ENCODE measurements at regions of chr6 and their contacts with region 1.

Region 1: DNA sequence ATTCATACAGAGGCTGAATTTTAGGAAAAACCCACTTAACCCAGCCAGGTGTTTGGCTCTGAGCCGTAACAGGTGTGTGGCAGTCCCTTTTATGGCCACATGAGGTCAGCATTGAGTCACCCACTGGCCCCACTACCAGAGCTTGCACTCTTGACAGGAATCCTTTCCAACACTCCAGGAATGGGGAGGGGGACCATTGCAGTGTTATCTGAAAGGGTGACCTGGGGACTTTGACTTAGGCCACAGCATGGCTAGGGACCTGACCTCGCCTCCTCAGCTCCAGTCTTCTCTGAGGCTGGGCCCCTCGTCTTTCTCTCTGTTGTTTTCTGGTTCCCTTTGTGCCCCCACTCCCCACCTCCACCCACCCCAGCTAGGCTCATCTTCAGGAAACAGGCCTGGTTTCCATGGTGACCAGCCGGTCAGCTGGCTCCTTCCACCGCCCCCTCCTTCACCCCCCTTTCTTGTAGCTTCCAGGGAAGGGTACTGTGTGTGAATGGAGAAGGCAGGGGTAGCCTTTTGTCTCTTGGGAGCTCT is 2.1 kb upstream of the TMEM151B start:
- DNase-seq: peak; percentile 62
- H3K4me3 Mint-ChIP-seq: no peak overlapping the region
- H3K27ac Mint-ChIP-seq: no peak overlapping the region
- H3K4me1 Mint-ChIP-seq: peaks cover 46% of the 10 kb centered on the region
- H3K27me3 Mint-ChIP-seq: peaks cover 42% of the 10 kb centered on the region

Region 2: GRCh38 chr6:44278774-44279697 is 10.9 kb after region 1 on chr6:
- CTCF ChIA-PET with region 1: interaction called, 16 read pairs
- POLR2A ChIA-PET with region 1: no interaction called
- DNase-seq: no peak
- H3K4me3 Mint-ChIP-seq: no peak overlapping the region
- H3K27ac Mint-ChIP-seq: no peak overlapping the region
- H3K4me1 Mint-ChIP-seq: peaks cover 2% of the 10 kb centered on the region
- H3K27me3 Mint-ChIP-seq: peaks cover 39% of the 10 kb centered on the region

Region 3: DNA sequence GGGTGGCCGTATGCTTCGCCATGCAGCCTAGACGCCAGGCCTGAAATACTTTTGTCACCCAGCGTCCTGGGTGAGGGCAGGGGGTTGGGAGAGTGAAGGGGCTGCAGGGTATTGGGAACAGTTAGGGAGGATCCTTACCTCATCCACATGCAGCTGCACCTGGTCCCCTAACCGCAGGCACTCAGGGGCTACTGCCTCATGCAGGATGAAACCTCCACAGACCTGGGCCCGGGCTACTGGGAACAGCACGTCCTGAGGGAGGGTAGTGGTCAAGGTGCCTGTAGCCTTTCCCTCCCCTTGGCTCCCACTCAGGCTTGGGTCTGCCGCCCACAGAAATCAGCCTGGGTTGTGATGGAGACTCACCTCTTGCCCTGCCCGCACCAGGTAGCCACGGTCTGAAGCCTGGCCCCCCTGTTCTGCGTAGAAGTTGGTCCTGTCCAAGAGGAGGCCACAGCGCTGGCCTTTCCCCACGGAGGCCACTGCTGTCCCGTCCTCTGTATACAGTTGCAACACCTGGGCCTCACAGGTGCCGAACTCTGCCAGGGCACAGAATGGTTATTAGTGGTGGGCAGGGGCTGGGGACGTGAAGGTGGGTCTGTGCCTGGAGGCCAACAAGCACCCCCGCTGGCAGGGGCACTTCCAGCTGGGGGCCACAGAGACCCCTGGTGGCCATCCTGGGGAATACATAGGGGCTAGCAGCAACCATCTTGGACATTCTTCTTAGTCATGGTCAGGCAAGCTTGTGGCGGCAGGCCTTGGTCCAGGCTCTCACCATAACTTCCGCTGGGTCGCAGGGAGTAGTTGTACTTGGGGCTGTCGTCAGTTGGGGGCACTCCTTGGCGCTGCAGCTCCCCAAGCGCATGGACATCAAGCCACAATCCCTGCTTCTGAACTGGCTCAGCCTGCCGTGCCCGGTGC is 36.4 kb after region 1 on chr6:
- CTCF ChIA-PET with region 1: interaction called, 19 read pairs
- POLR2A ChIA-PET with region 1: no interaction called
- DNase-seq: peak; percentile 34
- H3K4me3 Mint-ChIP-seq: no peak overlapping the region
- H3K27ac Mint-ChIP-seq: no peak overlapping the region
- H3K4me1 Mint-ChIP-seq: peaks cover 2% of the 10 kb centered on the region
- H3K27me3 Mint-ChIP-seq: no peaks in the 10 kb centered on the region

Region 4: GRCh38 chr6:44338228-44339122 is 70.3 kb after region 1 on chr6:
- CTCF ChIA-PET with region 1: interaction called, 25 read pairs
- POLR2A ChIA-PET with region 1: no interaction called
- DNase-seq: peak; percentile 76
- H3K4me3 Mint-ChIP-seq: no peak overlapping the region
- H3K27ac Mint-ChIP-seq: no peak overlapping the region
- H3K4me1 Mint-ChIP-seq: no peaks in the 10 kb centered on the region
- H3K27me3 Mint-ChIP-seq: peaks cover 30% of the 10 kb centered on the region

Measured in activated CD4-positive, alpha-beta T cell treated with anti-CD3 and anti-CD28 coated beads, Interleukin-2, amount 10 ng/mL, durations not matched to agents 7 days and 5 days (primary cell).